Activated CD4-positive, alpha-beta T cell treated with anti-CD3 and anti-CD28 coated beads, Interleukin-2, amount 10 ng/mL, durations not matched to agents 7 days and 5 days (primary cell): ENCODE measurements at regions of chr3 and their contacts with region 1.

Region 1: GRCh38 chr3:136752422-136753325 is 496 bp upstream of the STAG1 start:
- DNase-seq: peak; percentile 98
- H3K4me3 Mint-ChIP-seq: peak overlapping the region; percentile 91
- H3K27ac Mint-ChIP-seq: peak overlapping the region; percentile 99
- H3K4me1 Mint-ChIP-seq: peaks cover 37% of the 10 kb centered on the region
- H3K27me3 Mint-ChIP-seq: no peaks in the 10 kb centered on the region

Region 2: DNA sequence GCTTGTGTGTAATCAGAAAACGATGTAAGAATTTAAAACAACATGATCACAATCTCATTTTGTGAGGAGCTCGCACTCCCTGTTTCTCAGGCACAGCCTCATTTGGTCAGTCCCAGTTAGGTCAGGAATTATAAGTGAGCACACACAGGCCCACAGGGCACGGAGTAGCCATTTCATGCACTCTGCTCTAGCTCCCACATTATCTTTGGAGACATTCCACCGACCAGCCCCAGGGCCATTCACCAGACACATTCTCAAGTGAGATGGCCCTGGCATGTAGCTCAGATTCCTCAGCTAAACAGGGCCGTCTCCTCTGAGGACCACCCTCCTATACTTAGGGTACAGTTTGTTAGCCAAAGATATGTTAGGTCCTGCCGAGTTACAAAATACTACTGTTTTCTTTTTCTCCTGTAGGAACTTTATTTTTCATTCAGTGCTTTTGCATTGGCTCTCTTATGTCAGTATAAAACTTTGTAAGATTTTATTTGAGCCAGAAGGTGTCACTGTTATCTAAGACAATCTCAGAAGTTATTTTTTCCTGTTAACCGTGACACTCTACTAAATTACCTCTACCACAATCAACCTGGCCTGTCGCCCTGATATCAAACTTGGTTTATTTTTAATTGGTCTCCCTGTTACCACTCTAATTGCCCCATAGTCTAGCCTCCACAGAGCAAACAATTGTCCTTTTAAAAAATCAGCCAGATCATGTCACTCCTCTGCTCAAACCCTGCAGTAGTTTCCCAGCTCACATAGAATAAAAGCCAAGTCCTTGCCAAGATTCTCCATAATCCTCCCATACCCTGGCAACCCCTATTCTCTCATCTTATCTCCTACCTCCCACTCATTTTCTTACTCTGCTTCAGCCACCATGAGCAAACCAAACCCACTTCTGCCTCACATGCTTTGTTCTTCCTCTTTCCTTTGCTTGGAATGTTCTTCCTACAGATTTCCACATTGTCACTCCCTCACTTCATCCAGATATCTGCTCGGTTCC is 681.4 kb before region 1 on chr3:
- CTCF ChIA-PET with region 1: interaction called, 12 read pairs
- POLR2A ChIA-PET with region 1: no interaction called
- DNase-seq: no peak
- H3K4me3 Mint-ChIP-seq: no peak overlapping the region
- H3K27ac Mint-ChIP-seq: no peak overlapping the region
- H3K4me1 Mint-ChIP-seq: peaks cover 4% of the 10 kb centered on the region
- H3K27me3 Mint-ChIP-seq: peaks cover 7% of the 10 kb centered on the region

Region 3: GRCh38 chr3:136196401-136197158 is 556.1 kb before region 1 on chr3:
- CTCF ChIA-PET with region 1: interaction called, 12 read pairs
- POLR2A ChIA-PET with region 1: interaction called, 7 read pairs
- DNase-seq: peak; percentile 99
- H3K4me3 Mint-ChIP-seq: peak overlapping the region; percentile 99
- H3K27ac Mint-ChIP-seq: peak overlapping the region; percentile 97
- H3K4me1 Mint-ChIP-seq: peaks cover 23% of the 10 kb centered on the region
- H3K27me3 Mint-ChIP-seq: no peaks in the 10 kb centered on the region

Region 4: GRCh38 chr3:136390574-136390973 is 362.1 kb before region 1 on chr3:
- CTCF ChIA-PET with region 1: interaction called, 14 read pairs
- POLR2A ChIA-PET with region 1: interaction called, 6 read pairs
- DNase-seq: no peak
- H3K4me3 Mint-ChIP-seq: no peak overlapping the region
- H3K27ac Mint-ChIP-seq: no peak overlapping the region
- H3K4me1 Mint-ChIP-seq: peaks cover under 1% of the 10 kb centered on the region
- H3K27me3 Mint-ChIP-seq: no peaks in the 10 kb centered on the region

Region 5: DNA sequence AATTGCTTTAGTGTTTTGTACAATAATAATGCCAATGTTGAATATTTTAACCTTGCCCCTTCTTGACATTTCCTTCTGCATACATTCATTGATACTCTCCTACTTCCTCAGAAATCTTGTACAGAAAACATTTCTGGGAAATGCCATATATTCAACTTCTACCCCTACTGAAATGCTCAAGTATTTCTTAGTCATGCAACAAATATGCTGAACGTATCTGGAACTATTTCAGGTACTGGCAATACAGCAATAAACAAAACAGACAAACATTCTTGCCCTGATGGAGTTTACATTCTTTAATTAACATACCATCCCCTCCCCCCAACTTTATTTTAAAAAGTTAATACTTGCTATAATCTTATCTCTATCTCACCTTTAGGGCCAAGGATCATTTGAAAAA is 147.7 kb before region 1 on chr3:
- CTCF ChIA-PET with region 1: no interaction called
- POLR2A ChIA-PET with region 1: no interaction called
- DNase-seq: no peak
- H3K4me3 Mint-ChIP-seq: no peak overlapping the region
- H3K27ac Mint-ChIP-seq: no peak overlapping the region
- H3K4me1 Mint-ChIP-seq: peaks cover 16% of the 10 kb centered on the region
- H3K27me3 Mint-ChIP-seq: no peaks in the 10 kb centered on the region

Region 6: GRCh38 chr3:136780741-136781140 is 28.1 kb after region 1 on chr3:
- CTCF ChIA-PET with region 1: interaction called, 11 read pairs
- POLR2A ChIA-PET with region 1: no interaction called
- DNase-seq: no peak
- H3K4me3 Mint-ChIP-seq: no peak overlapping the region
- H3K27ac Mint-ChIP-seq: no peak overlapping the region
- H3K4me1 Mint-ChIP-seq: no peaks in the 10 kb centered on the region
- H3K27me3 Mint-ChIP-seq: no peaks in the 10 kb centered on the region

Region 7: GRCh38 chr3:136869282-136869681 is 116.6 kb after region 1 on chr3:
- CTCF ChIA-PET with region 1: no interaction called
- POLR2A ChIA-PET with region 1: no interaction called
- DNase-seq: no peak
- H3K4me3 Mint-ChIP-seq: no peak overlapping the region
- H3K27ac Mint-ChIP-seq: no peak overlapping the region
- H3K4me1 Mint-ChIP-seq: peaks cover 34% of the 10 kb centered on the region
- H3K27me3 Mint-ChIP-seq: no peaks in the 10 kb centered on the region

Region 8: GRCh38 chr3:137013955-137014688 is 261.4 kb after region 1 on chr3:
- CTCF ChIA-PET with region 1: interaction called, 52 read pairs
- POLR2A ChIA-PET with region 1: interaction called, 7 read pairs
- DNase-seq: peak; percentile 85
- H3K4me3 Mint-ChIP-seq: peak overlapping the region; percentile 52
- H3K27ac Mint-ChIP-seq: peak overlapping the region; percentile 63
- H3K4me1 Mint-ChIP-seq: peaks cover 14% of the 10 kb centered on the region
- H3K27me3 Mint-ChIP-seq: no peaks in the 10 kb centered on the region

Region 9: DNA sequence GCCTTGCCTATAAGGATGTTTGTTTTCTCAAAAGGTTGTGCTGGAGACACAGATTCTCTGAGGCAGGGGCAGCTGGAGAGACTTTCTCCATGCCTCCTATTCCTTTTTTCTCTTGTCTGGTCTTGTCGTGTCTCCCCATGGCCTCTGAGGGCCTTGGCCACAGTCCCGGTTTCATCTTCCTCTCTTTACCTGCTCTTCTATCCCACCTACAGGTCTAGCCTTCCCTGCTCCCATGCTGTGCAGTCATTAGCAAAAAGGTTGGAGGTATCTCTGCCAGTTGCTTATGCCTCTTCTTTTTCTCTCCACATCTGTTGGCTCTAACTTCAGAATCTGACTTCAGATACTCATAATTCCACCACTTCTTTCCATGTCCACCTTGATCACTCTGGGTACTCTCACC is 396.2 kb after region 1 on chr3:
- CTCF ChIA-PET with region 1: no interaction called
- POLR2A ChIA-PET with region 1: no interaction called
- DNase-seq: no peak
- H3K4me3 Mint-ChIP-seq: no peak overlapping the region
- H3K27ac Mint-ChIP-seq: no peak overlapping the region
- H3K4me1 Mint-ChIP-seq: no peaks in the 10 kb centered on the region
- H3K27me3 Mint-ChIP-seq: peaks cover 3% of the 10 kb centered on the region